ENCODE measurements at regions of chr11 and their contacts with region 1.

Region 1: DNA sequence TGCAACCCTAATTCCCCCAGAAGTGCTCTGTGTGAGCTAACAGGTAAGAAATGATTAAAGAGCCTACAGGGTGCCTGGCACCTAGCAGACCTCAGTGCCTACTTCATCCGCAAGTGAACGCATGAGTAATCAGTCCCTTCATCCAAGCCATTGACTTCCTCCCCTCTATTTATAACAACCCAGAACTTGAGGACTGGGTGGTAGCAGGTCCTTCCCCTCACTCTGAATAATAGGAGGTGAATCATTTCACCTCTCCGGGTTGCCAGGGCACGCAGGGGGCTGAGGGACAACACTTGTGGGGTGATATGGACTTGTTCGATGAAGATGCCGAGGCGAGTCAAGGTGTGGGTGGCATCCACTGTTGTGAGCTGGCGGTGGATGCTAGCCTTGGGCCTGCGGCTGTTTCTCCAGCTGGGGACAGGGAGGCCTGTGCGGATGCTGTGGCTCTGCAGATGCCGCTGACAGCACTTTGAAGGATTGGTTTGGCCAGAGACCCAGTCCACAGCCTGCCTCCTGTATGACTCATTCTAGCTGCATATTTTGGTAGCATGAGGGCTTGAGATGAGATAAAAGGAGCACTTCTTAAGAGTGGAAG is 11.7 kb upstream of the SORL1-AS1 start:
- DNase-seq: no peak
- H3K4me3 Mint-ChIP-seq: no peak overlapping the region
- H3K27ac Mint-ChIP-seq: no peak overlapping the region
- H3K4me1 Mint-ChIP-seq: peaks cover 19% of the 10 kb centered on the region
- H3K27me3 Mint-ChIP-seq: no peaks in the 10 kb centered on the region
- CTCF ChIP-seq: no peak

Region 2: DNA sequence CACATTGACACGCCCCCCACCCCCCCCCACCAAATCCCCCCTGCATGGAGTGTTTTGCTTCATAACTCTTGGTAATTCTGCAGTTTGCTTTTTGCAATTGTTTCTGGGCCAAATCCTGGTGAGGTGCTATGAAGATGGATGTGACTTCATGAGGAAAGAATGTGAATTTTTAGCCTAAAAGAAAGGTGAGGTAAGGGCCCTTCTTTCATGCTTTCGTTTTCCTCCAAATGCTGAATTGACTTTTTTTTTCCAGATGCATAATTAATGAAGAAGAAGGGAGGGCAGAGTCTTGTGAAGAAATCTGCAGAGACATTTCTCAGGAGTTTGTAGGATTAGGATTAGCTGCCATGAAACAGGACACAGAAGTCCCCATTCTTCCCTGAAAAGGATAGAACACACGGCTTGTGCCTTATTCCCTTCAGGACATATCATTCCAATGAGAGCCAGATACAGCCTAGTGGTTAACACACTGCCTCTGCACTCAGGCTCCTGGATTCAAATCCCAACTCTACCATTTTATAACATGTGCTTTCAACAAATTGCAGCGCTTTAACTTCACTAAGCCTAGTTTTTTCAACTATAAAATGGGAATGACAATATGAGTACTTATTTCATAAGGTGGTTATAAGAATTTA is 460.1 kb before region 1 on chr11:
- CTCF ChIA-PET with region 1: no interaction called
- intact Hi-C with region 1: no loop called
- DNase-seq: no peak
- H3K4me3 Mint-ChIP-seq: no peak overlapping the region
- H3K27ac Mint-ChIP-seq: no peak overlapping the region
- H3K4me1 Mint-ChIP-seq: no peaks in the 10 kb centered on the region
- H3K27me3 Mint-ChIP-seq: peaks cover 11% of the 10 kb centered on the region
- CTCF ChIP-seq: no peak

Region 3: GRCh38 chr11:121318848-121319834 is 145.3 kb before region 1 on chr11:
- CTCF ChIA-PET with region 1: no interaction called
- intact Hi-C with region 1: loop called (anchors 10 kb)
- DNase-seq: peak; percentile 5
- H3K4me3 Mint-ChIP-seq: no peak overlapping the region
- H3K27ac Mint-ChIP-seq: no peak overlapping the region
- H3K4me1 Mint-ChIP-seq: no peaks in the 10 kb centered on the region
- H3K27me3 Mint-ChIP-seq: peaks cover 22% of the 10 kb centered on the region
- CTCF ChIP-seq: peak; percentile 26

Region 4: GRCh38 chr11:121557348-121557747 is 92.9 kb after region 1 on chr11:
- CTCF ChIA-PET with region 1: interaction called, 4 read pairs
- intact Hi-C with region 1: loop called (anchors 10 kb)
- DNase-seq: no peak
- H3K4me3 Mint-ChIP-seq: no peak overlapping the region
- H3K27ac Mint-ChIP-seq: no peak overlapping the region
- H3K4me1 Mint-ChIP-seq: peaks cover 15% of the 10 kb centered on the region
- H3K27me3 Mint-ChIP-seq: no peaks in the 10 kb centered on the region
- CTCF ChIP-seq: no peak